Caco-2 (cell line): ENCODE measurements at regions of chr11 and their contacts with region 1.

Region 1: DNA sequence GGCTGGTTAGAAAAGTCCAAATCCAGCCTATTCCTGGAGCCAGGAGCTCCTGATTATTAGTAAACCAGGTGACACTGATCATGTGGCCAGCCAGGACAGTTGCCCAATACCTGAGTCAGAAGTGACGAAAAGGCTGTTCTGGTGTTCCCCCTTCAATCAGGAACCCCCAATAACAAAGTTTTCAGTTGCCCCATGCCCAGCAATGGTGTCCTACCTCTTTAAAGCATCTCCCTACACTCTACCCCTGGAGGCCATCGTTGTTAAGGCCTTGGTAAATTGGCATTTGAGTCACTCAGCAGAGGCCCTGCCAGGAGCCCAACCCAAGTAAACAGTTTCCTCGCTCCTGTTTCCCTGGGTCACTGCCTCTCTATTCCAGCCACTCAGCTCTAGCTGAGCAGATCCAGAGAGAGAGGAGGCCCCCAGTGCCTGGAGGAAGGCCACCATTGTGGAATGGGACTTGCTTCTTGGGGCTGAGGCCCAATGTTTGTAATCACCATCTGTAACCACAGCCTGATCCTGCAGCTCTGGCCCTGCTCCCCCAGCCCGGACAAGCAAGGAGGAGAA is 25.0 kb downstream of the ARHGAP1 start:
- DNase-seq: no peak
- H3K4me3 ChIP-seq: no peak overlapping the region
- H3K4me3 Mint-ChIP-seq: no peak overlapping the region
- H3K27ac Mint-ChIP-seq: peak overlapping the region; percentile 68
- H3K4me1 ChIP-seq: peaks cover 22% of the 10 kb centered on the region
- H3K4me1 Mint-ChIP-seq: peaks cover 12% of the 10 kb centered on the region
- H3K27me3 ChIP-seq: no peaks in the 10 kb centered on the region
- H3K27me3 Mint-ChIP-seq: no peaks in the 10 kb centered on the region
- CTCF ChIP-seq: no peak

Region 2: GRCh38 chr11:46272816-46273427 is 402.4 kb before region 1 on chr11:
- CTCF ChIA-PET with region 1: no interaction called
- POLR2A ChIA-PET with region 1: no interaction called
- intact Hi-C with region 1: no loop called
- DNase-seq: no peak
- H3K4me3 ChIP-seq: no peak overlapping the region
- H3K4me3 Mint-ChIP-seq: peak overlapping the region; percentile 26
- H3K27ac Mint-ChIP-seq: peak overlapping the region; percentile 82
- H3K4me1 ChIP-seq: peaks cover 71% of the 10 kb centered on the region
- H3K4me1 Mint-ChIP-seq: peaks cover 57% of the 10 kb centered on the region
- H3K27me3 ChIP-seq: no peaks in the 10 kb centered on the region
- H3K27me3 Mint-ChIP-seq: no peaks in the 10 kb centered on the region
- CTCF ChIP-seq: no peak

Region 3: GRCh38 chr11:46801694-46802470 is 126.5 kb after region 1 on chr11:
- CTCF ChIA-PET with region 1: no interaction called
- POLR2A ChIA-PET with region 1: interaction called, 11 read pairs
- intact Hi-C with region 1: no loop called
- DNase-seq: no peak
- H3K4me3 ChIP-seq: no peak overlapping the region
- H3K4me3 Mint-ChIP-seq: no peak overlapping the region
- H3K27ac Mint-ChIP-seq: no peak overlapping the region
- H3K4me1 ChIP-seq: no peaks in the 10 kb centered on the region
- H3K4me1 Mint-ChIP-seq: no peaks in the 10 kb centered on the region
- H3K27me3 ChIP-seq: no peaks in the 10 kb centered on the region
- H3K27me3 Mint-ChIP-seq: no peaks in the 10 kb centered on the region
- CTCF ChIP-seq: no peak